Activated CD8-positive, alpha-beta T cell treated with anti-CD3 and anti-CD28 coated beads for 36 hours (primary cell): ENCODE measurements at regions of chr20 and their contacts with region 1.

Region 1: DNA sequence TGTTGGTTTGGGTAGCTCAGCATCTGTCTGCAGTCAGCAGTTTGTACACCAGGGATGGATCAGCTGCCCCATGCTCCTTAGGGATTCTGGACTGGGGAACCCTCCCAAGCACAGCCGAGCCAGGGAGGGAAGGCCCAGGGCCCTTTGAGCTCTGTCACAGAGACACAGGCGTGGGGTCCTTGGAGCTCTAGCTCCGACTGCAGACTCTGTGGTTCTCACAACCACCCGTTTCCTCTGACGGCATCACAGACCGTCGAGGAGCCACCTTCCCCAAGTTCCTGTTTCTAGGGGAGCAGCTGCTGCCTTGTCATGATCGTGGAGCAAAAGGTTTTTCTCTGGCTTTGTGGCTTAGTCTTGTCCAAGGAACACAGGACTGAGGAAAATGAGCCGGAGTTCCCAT is at the start of gene SLA2:
- DNase-seq: peak; percentile 84
- ATAC-seq: peak; percentile 63
- H3K4me3 Mint-ChIP-seq: peak within 1 kb of the TSS; percentile 82
- H3K27ac Mint-ChIP-seq: peak within 1 kb of the TSS; percentile 98
- H3K4me1 Mint-ChIP-seq: peaks cover 35% of the 10 kb centered on the region
- H3K27me3 Mint-ChIP-seq: no peaks in the 10 kb centered on the region
- CTCF ChIP-seq: no peak
- total RNA-seq, gene SLA2: 51.5 to 53.5 TPM

Region 2: GRCh38 chr20:36573103-36573794 is 72.7 kb before region 1 on chr20 and contains the start of gene TGIF2:
- CTCF ChIA-PET with region 1: no interaction called
- POLR2A ChIA-PET with region 1: interaction called, 10 read pairs
- intact Hi-C with region 1: no loop called
- DNase-seq: peak; percentile 91
- ATAC-seq: peak; percentile 81
- H3K4me3 Mint-ChIP-seq: peak within 1 kb of the TSS; percentile 91
- H3K27ac Mint-ChIP-seq: peak within 1 kb of the TSS; percentile 96
- H3K4me1 Mint-ChIP-seq: peaks cover 30% of the 10 kb centered on the region
- H3K27me3 Mint-ChIP-seq: no peaks in the 10 kb centered on the region
- CTCF ChIP-seq: no peak
- total RNA-seq, gene TGIF2: 55.3 to 56.8 TPM

Region 3: GRCh38 chr20:36605399-36606157 is 40.4 kb before region 1 on chr20 and contains the start of gene RAB5IF:
- CTCF ChIA-PET with region 1: interaction called, 30 read pairs
- POLR2A ChIA-PET with region 1: interaction called, 21 read pairs
- intact Hi-C with region 1: no loop called
- DNase-seq: peak; percentile 99
- ATAC-seq: peak; percentile 88
- H3K4me3 Mint-ChIP-seq: peak within 1 kb of the TSS; percentile 100
- H3K27ac Mint-ChIP-seq: peak within 1 kb of the TSS; percentile 90
- H3K4me1 Mint-ChIP-seq: peaks cover 22% of the 10 kb centered on the region
- H3K27me3 Mint-ChIP-seq: no peaks in the 10 kb centered on the region
- CTCF ChIP-seq: peak; percentile 94
- total RNA-seq, gene RAB5IF: 74.5 to 77.1 TPM

Region 4: GRCh38 chr20:36629719-36630681 is 16.0 kb before region 1 on chr20:
- CTCF ChIA-PET with region 1: interaction called, 3 read pairs
- POLR2A ChIA-PET with region 1: interaction called, 18 read pairs
- intact Hi-C with region 1: no loop called
- DNase-seq: peak; percentile 75
- ATAC-seq: peak; percentile 94
- H3K4me3 Mint-ChIP-seq: peak overlapping the region; percentile 59
- H3K27ac Mint-ChIP-seq: peak overlapping the region; percentile 97
- H3K4me1 Mint-ChIP-seq: peaks cover 46% of the 10 kb centered on the region
- H3K27me3 Mint-ChIP-seq: no peaks in the 10 kb centered on the region
- CTCF ChIP-seq: no peak

Region 5: GRCh38 chr20:36773597-36774390 is 127.8 kb after region 1 on chr20 and contains the start of gene DSN1:
- CTCF ChIA-PET with region 1: interaction called, 12 read pairs
- POLR2A ChIA-PET with region 1: interaction called, 3 read pairs
- intact Hi-C with region 1: no loop called
- DNase-seq: peak; percentile 98
- ATAC-seq: peak; percentile 89
- H3K4me3 Mint-ChIP-seq: peak within 1 kb of the TSS; percentile 92
- H3K27ac Mint-ChIP-seq: peak within 1 kb of the TSS; percentile 99
- H3K4me1 Mint-ChIP-seq: peaks cover 10% of the 10 kb centered on the region
- H3K27me3 Mint-ChIP-seq: no peaks in the 10 kb centered on the region
- CTCF ChIP-seq: no peak
- total RNA-seq, gene DSN1: 21.6 to 23.9 TPM